BJ (cell line): ENCODE measurements at regions of chr12 and their contacts with region 1.

Region 1: DNA sequence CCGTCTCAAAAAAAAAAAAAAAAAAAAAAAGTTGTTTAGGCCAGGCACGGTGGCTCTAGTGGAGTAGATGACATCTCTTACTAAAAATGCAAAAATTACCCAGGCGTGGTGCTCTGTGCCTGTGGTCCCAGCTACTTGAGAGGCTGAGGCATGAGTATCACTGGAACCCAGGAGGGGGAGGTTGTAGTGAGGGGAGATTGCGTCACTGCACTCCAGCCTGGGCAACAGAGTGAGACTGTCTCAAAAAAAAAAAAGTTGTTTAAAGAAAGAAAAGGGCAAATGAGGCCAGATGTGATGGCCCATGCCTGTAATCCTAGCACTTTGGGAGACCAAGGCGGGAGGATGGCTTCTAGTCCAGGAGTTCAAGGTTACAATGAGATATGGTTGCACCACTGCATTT is 36.6 kb upstream of the SPPL3 start:
- DNase-seq: no peak
- H3K4me3 ChIP-seq: no peak overlapping the region
- H3K27me3 ChIP-seq: peaks cover 2% of the 10 kb centered on the region; the same call in 1 of the 2 replicates
- CTCF ChIP-seq: no peak

Region 2: DNA sequence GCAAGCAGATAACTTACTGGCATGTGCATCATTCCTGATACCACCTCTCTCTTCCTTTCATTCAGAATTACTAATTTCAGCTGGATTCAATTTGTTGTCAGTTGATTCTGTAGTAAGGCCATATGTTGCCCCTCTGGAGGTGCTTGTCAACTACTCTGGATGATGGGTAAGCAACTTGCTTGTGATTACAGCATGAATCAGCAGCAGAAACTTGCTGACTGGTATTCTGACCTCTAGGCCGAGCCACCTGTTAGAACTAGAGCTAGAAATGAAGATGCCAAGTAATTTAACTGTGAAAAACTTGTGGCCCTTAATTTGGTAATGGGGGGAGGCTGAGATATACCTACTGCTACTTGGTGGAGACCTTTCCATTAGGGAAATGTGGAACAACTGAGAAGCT is 401.5 kb before region 1 on chr12:
- CTCF ChIA-PET with region 1: no interaction called
- POLR2A ChIA-PET with region 1: interaction called, 15 read pairs
- DNase-seq: no peak
- H3K4me3 ChIP-seq: no peak overlapping the region
- H3K27me3 ChIP-seq: no peaks in the 10 kb centered on the region
- CTCF ChIP-seq: no peak

Region 3: GRCh38 chr12:120866108-120866507 is 74.7 kb before region 1 on chr12:
- CTCF ChIA-PET with region 1: no interaction called
- POLR2A ChIA-PET with region 1: no interaction called
- DNase-seq: no peak
- H3K4me3 ChIP-seq: no peak overlapping the region
- H3K27me3 ChIP-seq: no peaks in the 10 kb centered on the region
- CTCF ChIP-seq: no peak